A549 (cell line): ENCODE measurements at regions of chr3 and their contacts with region 1.

Region 1: DNA sequence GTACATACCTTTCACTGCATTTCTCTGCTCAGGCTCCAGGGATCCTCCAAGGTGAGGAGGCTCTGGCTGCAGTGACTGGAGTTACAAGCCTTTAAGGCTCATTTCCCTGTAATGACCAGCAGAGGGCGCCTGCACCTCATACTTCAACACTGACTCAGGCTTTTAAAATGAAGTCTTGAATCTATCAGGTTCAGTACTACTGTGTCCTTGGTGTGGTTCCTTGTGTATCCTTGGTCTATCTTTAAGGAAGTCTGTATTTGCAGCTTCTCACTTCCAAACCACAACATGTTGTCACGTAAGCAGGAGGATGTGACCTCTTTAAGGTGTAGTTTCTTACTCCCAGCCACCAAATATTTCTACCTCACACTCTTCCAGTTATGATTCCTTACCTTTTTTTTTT is 122.5 kb upstream of the ZBED2 start:
- DNase-seq: peak; percentile 76 to 88
- ATAC-seq: peak; percentile 92 to 96
- H3K4me3 ChIP-seq: no peak overlapping the region
- H3K27ac ChIP-seq: peak overlapping the region; percentile 65 to 83
- H3K4me1 ChIP-seq: peaks cover 7% of the 10 kb centered on the region
- CTCF ChIP-seq: peak; percentile 96
- EP300 ChIP-seq: no peak
- POLR2A ChIP-seq: no peak
- RAD21 ChIP-seq: peak; percentile 99

Region 2: GRCh38 chr3:111577794-111578685 is 139.6 kb before region 1 on chr3:
- CTCF ChIA-PET with region 1: interaction called, 70 read pairs
- POLR2A ChIA-PET with region 1: interaction called, 5 read pairs
- DNase-seq: peak; percentile 79 to 83
- ATAC-seq: peak; percentile 92
- H3K4me3 ChIP-seq: no peak overlapping the region
- H3K27ac ChIP-seq: peak overlapping the region; percentile 50 to 73; a peak in 5 of 6 replicates
- H3K4me1 ChIP-seq: peaks cover 46% of the 10 kb centered on the region
- CTCF ChIP-seq: peak; percentile 81
- EP300 ChIP-seq: no peak
- POLR2A ChIP-seq: no peak
- RAD21 ChIP-seq: peak; percentile 92 to 93

Region 3: GRCh38 chr3:111635403-111635802 is 82.2 kb before region 1 on chr3:
- CTCF ChIA-PET with region 1: no interaction called
- POLR2A ChIA-PET with region 1: no interaction called
- DNase-seq: no peak
- ATAC-seq: no peak
- H3K4me3 ChIP-seq: no peak overlapping the region
- H3K27ac ChIP-seq: no peak overlapping the region
- H3K4me1 ChIP-seq: no peaks in the 10 kb centered on the region
- CTCF ChIP-seq: no peak
- EP300 ChIP-seq: no peak
- POLR2A ChIP-seq: no peak
- RAD21 ChIP-seq: no peak

Region 4: DNA sequence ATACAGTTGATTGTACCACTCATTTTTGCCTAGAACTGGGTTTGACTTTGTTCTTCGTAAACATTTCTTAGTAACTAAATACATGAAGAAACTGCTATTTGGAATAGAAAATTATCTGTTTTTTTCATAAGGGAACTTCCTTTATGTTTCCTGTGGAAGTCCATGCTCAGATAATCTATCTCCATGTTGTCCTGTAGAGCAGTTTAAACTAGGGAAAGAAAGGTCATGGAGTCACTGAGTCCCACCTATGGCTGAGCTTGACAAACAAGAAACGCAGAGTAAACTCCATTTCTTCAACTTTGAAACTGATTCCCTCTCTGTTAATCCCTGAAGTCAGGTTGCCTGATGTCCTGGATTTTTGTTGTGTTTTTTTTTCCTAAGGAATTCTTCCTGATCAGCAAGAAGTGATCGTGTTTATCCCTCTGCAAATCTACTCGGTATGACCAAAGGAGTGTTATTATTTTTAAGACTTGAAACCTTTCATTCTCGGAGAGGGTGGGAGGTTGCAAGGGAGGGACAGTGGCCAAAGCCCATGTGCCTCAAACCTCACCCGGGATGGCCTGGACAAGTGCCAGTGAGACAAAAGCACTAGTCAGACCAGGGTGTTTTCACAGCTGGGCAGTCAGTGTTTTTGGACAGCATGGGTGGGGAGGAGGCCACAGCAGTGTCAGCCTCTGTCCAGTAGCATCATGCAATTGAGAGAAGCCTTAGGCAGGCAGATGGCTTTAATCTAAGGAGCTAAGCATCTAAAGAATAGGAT is 11.7 kb after region 1 on chr3:
- CTCF ChIA-PET with region 1: interaction called, 87 read pairs
- POLR2A ChIA-PET with region 1: no interaction called
- DNase-seq: no peak
- ATAC-seq: no peak
- H3K4me3 ChIP-seq: no peak overlapping the region
- H3K27ac ChIP-seq: peak overlapping the region in 1 of 2 experiments; percentile 63; a peak in 3 of 6 replicates
- H3K4me1 ChIP-seq: peaks cover 41% of the 10 kb centered on the region
- CTCF ChIP-seq: no peak
- EP300 ChIP-seq: no peak
- POLR2A ChIP-seq: no peak
- RAD21 ChIP-seq: no peak

Region 5: GRCh38 chr3:111794711-111795110 is 77.1 kb after region 1 on chr3:
- CTCF ChIA-PET with region 1: interaction called, 20 read pairs
- POLR2A ChIA-PET with region 1: no interaction called
- DNase-seq: no peak
- ATAC-seq: no peak
- H3K4me3 ChIP-seq: no peak overlapping the region
- H3K27ac ChIP-seq: no peak overlapping the region
- H3K4me1 ChIP-seq: peaks cover 7% of the 10 kb centered on the region; the same call in 1 of the 3 replicates
- CTCF ChIP-seq: no peak
- EP300 ChIP-seq: no peak
- POLR2A ChIP-seq: no peak
- RAD21 ChIP-seq: no peak

Region 6: GRCh38 chr3:111859974-111860859 is 142.6 kb after region 1 on chr3:
- CTCF ChIA-PET with region 1: interaction called, 289 read pairs
- POLR2A ChIA-PET with region 1: interaction called, 24 read pairs
- DNase-seq: peak; percentile 88 to 90
- ATAC-seq: peak; percentile 83 to 86
- H3K4me3 ChIP-seq: peak overlapping the region; percentile 81
- H3K27ac ChIP-seq: peak overlapping the region; percentile 91 to 99
- H3K4me1 ChIP-seq: peaks cover 46% of the 10 kb centered on the region
- CTCF ChIP-seq: peak; percentile 61
- EP300 ChIP-seq: no peak
- POLR2A ChIP-seq: no peak; the same call in 1 of the 2 replicates
- RAD21 ChIP-seq: peak; percentile 81 to 93

Region 7: GRCh38 chr3:111936191-111936841 is 218.7 kb after region 1 on chr3:
- CTCF ChIA-PET with region 1: interaction called, 14 read pairs
- POLR2A ChIA-PET with region 1: no interaction called
- DNase-seq: peak; percentile 40 to 48
- ATAC-seq: peak; percentile 91 to 93
- H3K4me3 ChIP-seq: no peak overlapping the region
- H3K27ac ChIP-seq: peak overlapping the region; percentile 58 to 88
- H3K4me1 ChIP-seq: peaks cover 49% of the 10 kb centered on the region
- CTCF ChIP-seq: no peak
- EP300 ChIP-seq: peak; percentile 39 to 44; a peak in 2 of 5 replicates
- POLR2A ChIP-seq: no peak
- RAD21 ChIP-seq: no peak; a peak in 1 of 5 replicates

Region 8: GRCh38 chr3:112043603-112044201 is 326.1 kb after region 1 on chr3:
- CTCF ChIA-PET with region 1: interaction called, 14 read pairs
- POLR2A ChIA-PET with region 1: no interaction called
- DNase-seq: peak; percentile 73 to 82
- ATAC-seq: peak; percentile 96 to 99
- H3K4me3 ChIP-seq: no peak overlapping the region
- H3K27ac ChIP-seq: no peak overlapping the region
- H3K4me1 ChIP-seq: peaks cover 11% of the 10 kb centered on the region; the same call in 1 of the 3 replicates
- CTCF ChIP-seq: peak; percentile 92
- EP300 ChIP-seq: no peak
- POLR2A ChIP-seq: no peak
- RAD21 ChIP-seq: peak; percentile 80 to 81